Caco-2 (cell line): ENCODE measurements at regions of chr16 and their contacts with region 1.

Region 1: GRCh38 chr16:64858076-64858475 is 263.8 kb downstream of the CDH11 start:
- DNase-seq: no peak
- H3K4me3 ChIP-seq: no peak overlapping the region
- H3K4me3 Mint-ChIP-seq: no peak overlapping the region
- H3K27ac Mint-ChIP-seq: no peak overlapping the region
- H3K4me1 ChIP-seq: no peaks in the 10 kb centered on the region
- H3K4me1 Mint-ChIP-seq: no peaks in the 10 kb centered on the region
- H3K27me3 ChIP-seq: no peaks in the 10 kb centered on the region
- H3K27me3 Mint-ChIP-seq: peaks cover 9% of the 10 kb centered on the region
- CTCF ChIP-seq: no peak

Region 2: GRCh38 chr16:64771273-64771672 is 86.8 kb before region 1 on chr16:
- CTCF ChIA-PET with region 1: no interaction called
- POLR2A ChIA-PET with region 1: interaction called, 12 read pairs
- intact Hi-C with region 1: no loop called
- DNase-seq: no peak
- H3K4me3 ChIP-seq: no peak overlapping the region
- H3K4me3 Mint-ChIP-seq: no peak overlapping the region
- H3K27ac Mint-ChIP-seq: no peak overlapping the region
- H3K4me1 ChIP-seq: no peaks in the 10 kb centered on the region
- H3K4me1 Mint-ChIP-seq: no peaks in the 10 kb centered on the region
- H3K27me3 ChIP-seq: no peaks in the 10 kb centered on the region
- H3K27me3 Mint-ChIP-seq: peaks cover 6% of the 10 kb centered on the region
- CTCF ChIP-seq: no peak